HEK293 (cell line): ENCODE measurements at regions of chr9 and their contacts with region 1.

Region 1: DNA sequence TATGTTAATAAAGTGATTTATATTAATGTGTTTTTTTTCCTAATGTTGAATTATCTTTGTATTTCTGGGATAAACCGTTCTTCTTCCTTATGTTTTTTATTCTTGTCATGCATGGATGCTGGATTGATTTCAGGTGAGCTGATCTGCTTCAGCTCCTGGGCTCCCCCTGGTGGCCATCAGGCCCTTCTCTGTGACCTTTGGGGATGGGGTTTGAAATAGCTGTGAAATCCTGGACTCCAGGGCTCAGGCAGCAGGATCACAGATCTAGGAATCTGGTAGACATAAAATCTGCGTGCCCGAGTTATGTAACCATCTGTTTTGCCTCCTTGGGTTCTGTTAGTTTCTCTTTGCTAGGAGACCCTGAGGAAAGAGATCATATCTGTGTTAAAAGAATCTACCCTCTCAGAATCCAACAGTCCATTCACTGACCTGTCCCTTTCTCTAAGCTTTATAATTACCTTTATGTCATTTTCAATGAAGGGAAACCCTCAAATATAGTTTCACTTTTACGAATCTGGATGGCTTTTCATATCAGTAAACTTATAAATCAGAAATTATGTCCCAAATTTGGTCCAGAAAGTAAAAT is 12.2 kb upstream of the OR13J1 start:
- H3K4me3 ChIP-seq: no peak overlapping the region
- H3K27ac ChIP-seq: no peak overlapping the region
- H3K4me1 ChIP-seq: no peaks in the 10 kb centered on the region
- CTCF ChIP-seq: peak; percentile 41; the same call in 1 of the 2 replicates

Region 2: DNA sequence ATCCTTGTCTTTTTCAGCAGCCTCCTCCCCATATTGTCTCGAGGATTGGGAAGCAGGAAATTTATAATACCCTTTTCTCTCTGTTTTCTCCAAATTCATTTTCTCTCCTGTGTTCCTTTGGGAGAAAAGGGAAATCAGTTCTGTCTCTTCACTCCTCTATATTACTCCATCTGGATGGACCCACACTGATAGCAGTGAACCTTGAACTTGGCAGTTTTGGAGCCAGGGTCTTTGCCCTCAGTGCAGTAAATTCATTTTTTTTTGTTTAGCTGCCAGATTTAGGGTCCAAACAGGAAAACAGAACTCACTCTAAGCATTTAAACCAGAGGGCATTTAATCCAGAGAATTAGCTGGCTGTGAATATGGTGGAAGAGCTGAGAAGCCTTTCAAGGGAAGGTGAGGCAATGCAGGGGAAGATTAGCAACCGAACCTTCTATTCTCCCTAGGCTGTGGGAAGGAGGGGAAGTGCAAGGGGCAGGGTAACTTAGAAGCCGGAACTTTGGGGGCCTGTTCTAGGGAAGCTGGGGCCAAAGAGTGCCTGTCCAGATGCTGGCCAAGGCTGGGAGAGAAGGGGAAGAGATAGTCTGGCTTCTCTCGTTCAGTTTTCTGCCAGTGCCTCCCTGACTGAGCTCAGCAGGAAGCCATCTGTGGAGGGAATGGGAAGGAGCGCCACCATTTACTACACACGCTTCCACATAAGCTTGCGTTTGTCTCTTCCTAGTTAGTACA is 107.3 kb before region 1 on chr9:
- CTCF ChIA-PET with region 1: interaction called, 13 read pairs
- POLR2A ChIA-PET with region 1: no interaction called
- H3K4me3 ChIP-seq: no peak overlapping the region
- H3K27ac ChIP-seq: no peak overlapping the region
- H3K4me1 ChIP-seq: peaks cover 18% of the 10 kb centered on the region
- CTCF ChIP-seq: no peak

Region 3: GRCh38 chr9:35826071-35826701 is 56.2 kb before region 1 on chr9:
- CTCF ChIA-PET with region 1: interaction called, 26 read pairs
- POLR2A ChIA-PET with region 1: no interaction called
- H3K4me3 ChIP-seq: no peak overlapping the region
- H3K27ac ChIP-seq: no peak overlapping the region; the same call in 1 of the 2 replicates
- H3K4me1 ChIP-seq: peaks cover 4% of the 10 kb centered on the region; the same call in 1 of the 2 replicates
- CTCF ChIP-seq: peak; percentile 65; the same call in 1 of the 2 replicates

Region 4: GRCh38 chr9:35856882-35857281 is 25.5 kb before region 1 on chr9:
- CTCF ChIA-PET with region 1: interaction called, 26 read pairs
- POLR2A ChIA-PET with region 1: no interaction called
- H3K4me3 ChIP-seq: no peak overlapping the region
- H3K27ac ChIP-seq: no peak overlapping the region
- H3K4me1 ChIP-seq: no peaks in the 10 kb centered on the region
- CTCF ChIP-seq: no peak

Region 5: GRCh38 chr9:35923927-35924763 is 41.8 kb after region 1 on chr9:
- CTCF ChIA-PET with region 1: interaction called, 10 read pairs
- POLR2A ChIA-PET with region 1: no interaction called
- H3K4me3 ChIP-seq: no peak overlapping the region
- H3K27ac ChIP-seq: no peak overlapping the region
- H3K4me1 ChIP-seq: no peaks in the 10 kb centered on the region
- CTCF ChIP-seq: no peak